Activated CD8-positive, alpha-beta T cell treated with anti-CD3 and anti-CD28 coated beads, Interleukin-2, amount 10 ng/mL, durations not matched to agents 7 days and 5 days (primary cell): ENCODE measurements at regions of chr2 and their contacts with region 1.

Region 1: DNA sequence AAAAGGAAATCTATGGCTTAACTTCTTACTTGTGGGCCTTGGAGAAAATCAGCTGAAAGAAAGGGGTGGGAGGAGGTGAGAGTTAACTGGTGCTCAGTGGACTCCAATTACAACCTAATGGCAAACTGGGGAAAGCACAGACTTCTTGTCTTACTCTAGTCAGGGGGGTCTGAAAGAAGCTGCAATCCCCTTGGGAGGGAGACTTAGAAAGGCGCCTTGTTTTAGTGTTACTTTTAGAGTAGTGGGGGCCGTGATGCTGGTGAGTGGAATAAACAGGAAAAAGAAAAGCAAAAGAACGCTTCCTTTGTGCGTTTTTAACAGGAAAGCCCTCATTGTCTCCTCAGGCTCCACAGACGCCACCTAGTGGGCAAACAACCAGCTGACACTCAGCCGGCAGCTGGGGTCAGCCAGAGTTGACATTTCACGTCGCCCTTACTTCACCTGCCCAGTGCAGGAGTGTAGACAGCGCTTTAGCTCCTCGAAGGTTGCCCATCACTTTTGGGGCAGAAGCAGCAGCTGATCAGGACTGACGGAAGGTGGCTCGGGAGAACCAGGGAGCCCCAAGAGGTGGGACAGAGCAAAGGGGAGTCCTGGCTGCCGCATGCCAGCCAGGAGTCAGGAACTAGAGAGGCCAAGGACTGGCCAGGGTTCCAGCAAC is 55.9 kb upstream of the GORASP2 start:
- DNase-seq: peak; percentile 87
- ATAC-seq: peak; percentile 99
- H3K4me3 Mint-ChIP-seq: peak overlapping the region; percentile 48
- H3K27ac Mint-ChIP-seq: peak overlapping the region; percentile 73
- H3K4me1 Mint-ChIP-seq: peaks cover 15% of the 10 kb centered on the region
- H3K27me3 Mint-ChIP-seq: peaks cover 8% of the 10 kb centered on the region

Region 2: DNA sequence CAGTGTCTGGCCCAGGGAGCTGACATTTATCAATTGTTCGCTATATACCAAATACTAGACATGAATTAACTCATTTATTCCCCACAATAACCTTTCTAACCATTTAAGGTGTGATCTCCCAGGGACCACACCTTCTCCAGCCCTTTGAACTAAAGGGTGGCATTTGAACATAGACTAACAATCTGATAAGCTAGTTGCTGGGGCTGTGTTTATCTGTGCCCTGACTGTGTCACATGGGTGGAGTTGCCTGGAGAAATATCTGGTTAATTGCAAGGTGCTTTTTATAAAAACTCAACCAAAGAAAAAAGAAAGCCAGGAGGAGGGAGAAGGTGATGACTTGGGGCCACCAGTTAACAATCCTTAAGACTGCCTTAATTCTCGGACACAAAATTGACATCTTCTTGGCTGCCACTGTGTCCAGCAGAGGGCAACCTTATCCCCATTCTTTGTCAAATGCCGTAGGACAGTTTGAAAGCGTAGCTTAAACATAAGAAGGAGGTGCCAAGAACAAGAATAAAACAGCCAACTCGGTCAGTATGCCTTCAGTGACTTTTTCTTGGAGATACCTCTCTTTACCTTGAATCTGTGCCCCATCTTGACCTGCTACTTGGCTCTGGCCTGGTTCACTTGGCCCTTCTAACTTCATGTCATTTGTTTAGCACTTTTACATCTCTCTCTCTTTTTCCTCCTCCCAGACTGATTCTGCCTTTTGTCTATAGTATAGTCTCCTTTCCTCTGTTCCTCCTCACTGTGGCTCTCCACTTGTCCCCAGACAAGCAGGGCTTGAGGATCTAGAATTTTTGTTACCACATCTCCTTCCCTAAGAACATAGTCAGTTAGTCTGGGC is 511.9 kb before region 1 on chr2:
- CTCF ChIA-PET with region 1: interaction called, 10 read pairs
- POLR2A ChIA-PET with region 1: no interaction called
- DNase-seq: peak; percentile 79
- ATAC-seq: peak; percentile 88
- H3K4me3 Mint-ChIP-seq: peak overlapping the region; percentile 1
- H3K27ac Mint-ChIP-seq: peak overlapping the region; percentile 68
- H3K4me1 Mint-ChIP-seq: peaks cover 36% of the 10 kb centered on the region
- H3K27me3 Mint-ChIP-seq: peaks cover 14% of the 10 kb centered on the region

Region 3: GRCh38 chr2:170815746-170816503 is 57.2 kb before region 1 on chr2:
- CTCF ChIA-PET with region 1: interaction called, 50 read pairs
- POLR2A ChIA-PET with region 1: no interaction called
- DNase-seq: peak; percentile 77
- ATAC-seq: peak; percentile 50
- H3K4me3 Mint-ChIP-seq: peak overlapping the region; percentile 77
- H3K27ac Mint-ChIP-seq: no peak overlapping the region
- H3K4me1 Mint-ChIP-seq: peaks cover 53% of the 10 kb centered on the region
- H3K27me3 Mint-ChIP-seq: peaks cover 85% of the 10 kb centered on the region

Region 4: DNA sequence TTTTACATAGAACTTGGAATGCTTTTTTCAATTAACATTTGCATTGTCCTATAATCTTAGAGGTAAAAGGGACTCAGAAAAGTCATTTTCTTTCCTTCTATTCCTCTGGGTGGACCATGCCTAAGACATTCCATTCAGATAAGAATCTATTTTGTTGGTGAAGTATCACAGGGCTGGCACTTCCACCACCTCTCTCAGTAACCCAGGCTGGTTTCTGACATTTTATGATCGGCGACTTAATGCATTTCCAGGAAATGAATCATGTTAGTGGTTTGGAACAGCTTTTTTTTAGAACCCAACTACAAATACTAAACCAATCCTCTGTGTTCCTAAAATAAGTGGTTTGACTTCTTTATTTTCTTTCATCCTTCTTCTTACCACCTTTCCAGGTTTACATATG is 29.5 kb before region 1 on chr2:
- CTCF ChIA-PET with region 1: interaction called, 46 read pairs
- POLR2A ChIA-PET with region 1: no interaction called
- DNase-seq: no peak
- ATAC-seq: peak; percentile 75
- H3K4me3 Mint-ChIP-seq: no peak overlapping the region
- H3K27ac Mint-ChIP-seq: no peak overlapping the region
- H3K4me1 Mint-ChIP-seq: peaks cover 24% of the 10 kb centered on the region
- H3K27me3 Mint-ChIP-seq: peaks cover 5% of the 10 kb centered on the region

Region 5: DNA sequence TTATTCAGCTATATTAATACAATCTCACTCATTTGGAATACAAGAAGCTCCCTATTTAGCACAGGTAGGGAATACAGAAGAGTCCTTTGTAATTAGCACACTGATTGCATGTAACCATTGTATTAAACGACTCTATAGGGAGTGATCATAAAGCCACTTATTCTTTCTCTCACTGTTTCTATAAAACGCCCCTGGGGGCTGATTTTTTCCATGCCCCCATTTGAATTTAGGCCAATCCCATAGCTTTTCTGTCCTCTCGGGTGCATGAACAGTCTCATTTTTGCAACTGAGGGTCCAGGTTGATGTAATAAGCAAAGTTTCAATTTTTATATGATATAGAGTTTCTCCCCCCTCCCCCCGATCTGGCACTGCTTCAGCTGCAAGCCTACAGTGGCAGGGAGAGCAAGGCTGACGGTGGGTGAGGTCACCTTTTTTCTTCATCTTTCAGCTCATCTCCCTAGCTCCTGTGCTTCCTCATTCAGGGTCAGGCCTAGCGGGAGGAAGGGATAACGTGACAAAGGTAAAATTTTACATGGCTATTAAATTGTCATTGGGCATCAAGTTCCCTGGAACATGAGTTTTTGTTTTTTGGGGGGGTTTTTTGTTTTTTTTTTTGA is 10.8 kb before region 1 on chr2:
- CTCF ChIA-PET with region 1: interaction called, 10 read pairs
- POLR2A ChIA-PET with region 1: no interaction called
- DNase-seq: no peak
- ATAC-seq: no peak
- H3K4me3 Mint-ChIP-seq: no peak overlapping the region
- H3K27ac Mint-ChIP-seq: no peak overlapping the region
- H3K4me1 Mint-ChIP-seq: no peaks in the 10 kb centered on the region
- H3K27me3 Mint-ChIP-seq: peaks cover 17% of the 10 kb centered on the region

Region 6: DNA sequence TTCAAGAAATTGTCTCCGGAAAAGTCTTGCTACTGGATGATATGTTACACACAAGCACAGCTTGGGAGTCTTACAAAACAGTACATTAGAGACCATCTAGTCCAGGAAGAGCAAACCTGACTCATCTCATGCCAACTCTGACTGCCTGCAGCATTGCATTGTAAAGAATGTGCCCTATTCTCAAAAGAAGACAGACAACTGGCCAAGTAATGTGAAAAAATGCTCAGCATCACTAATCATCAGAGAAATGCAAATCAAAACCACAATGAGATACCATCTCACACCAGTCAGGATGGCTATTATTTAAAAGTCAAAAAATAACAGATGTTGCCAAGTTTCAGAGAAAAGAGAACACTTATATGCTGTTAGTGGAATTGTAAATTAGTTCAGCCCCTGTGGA is 13.2 kb after region 1 on chr2:
- CTCF ChIA-PET with region 1: interaction called, 21 read pairs
- POLR2A ChIA-PET with region 1: interaction called, 3 read pairs
- DNase-seq: no peak
- ATAC-seq: no peak
- H3K4me3 Mint-ChIP-seq: no peak overlapping the region
- H3K27ac Mint-ChIP-seq: no peak overlapping the region
- H3K4me1 Mint-ChIP-seq: no peaks in the 10 kb centered on the region
- H3K27me3 Mint-ChIP-seq: peaks cover 32% of the 10 kb centered on the region

Region 7: DNA sequence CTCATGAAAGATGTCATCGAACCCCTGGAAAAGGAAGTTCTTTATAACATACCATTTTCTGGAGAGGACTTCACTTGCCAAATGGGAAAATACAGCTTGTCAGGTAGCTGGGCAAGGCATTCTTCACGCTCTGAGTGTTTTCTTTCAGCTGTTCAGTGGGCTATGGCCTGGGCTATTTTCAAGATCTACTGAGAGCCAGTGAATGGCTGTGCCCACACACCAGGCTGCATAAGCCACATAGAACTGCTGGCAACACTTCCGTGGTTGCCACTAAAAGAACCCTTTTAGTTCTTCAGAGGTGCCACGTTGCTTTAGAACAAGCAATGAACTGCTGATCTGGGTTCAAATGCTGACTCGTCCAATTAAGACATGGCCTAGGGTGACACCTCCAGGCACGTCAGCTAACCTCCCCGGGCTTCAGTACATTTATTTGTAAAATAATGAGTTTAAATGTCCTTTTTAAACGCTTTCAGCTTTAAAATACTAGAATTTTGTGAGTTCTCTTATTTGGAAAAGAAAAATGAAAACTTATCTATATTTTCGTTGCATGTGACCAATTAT is 19.3 kb after region 1 on chr2:
- CTCF ChIA-PET with region 1: interaction called, 11 read pairs
- POLR2A ChIA-PET with region 1: interaction called, 3 read pairs
- DNase-seq: no peak
- ATAC-seq: no peak
- H3K4me3 Mint-ChIP-seq: no peak overlapping the region
- H3K27ac Mint-ChIP-seq: no peak overlapping the region
- H3K4me1 Mint-ChIP-seq: no peaks in the 10 kb centered on the region
- H3K27me3 Mint-ChIP-seq: peaks cover 28% of the 10 kb centered on the region